ENCODE measurements at regions of chr16 and their contacts with region 1.

Region 1: GRCh38 chr16:83187405-83187804 is 560.6 kb downstream of the CDH13 start:
- DNase-seq: no peak

Region 2: GRCh38 chr16:82621796-82622195 is 565.6 kb before region 1 on chr16:
- intact Hi-C with region 1: loop called in 1 of 2 experiments (anchors 5 kb)
- DNase-seq: no peak

Measured in posterior vena cava (tissue), 2 donors.